ENCODE measurements at regions of chr7 and their contacts with region 1.

Region 1: DNA sequence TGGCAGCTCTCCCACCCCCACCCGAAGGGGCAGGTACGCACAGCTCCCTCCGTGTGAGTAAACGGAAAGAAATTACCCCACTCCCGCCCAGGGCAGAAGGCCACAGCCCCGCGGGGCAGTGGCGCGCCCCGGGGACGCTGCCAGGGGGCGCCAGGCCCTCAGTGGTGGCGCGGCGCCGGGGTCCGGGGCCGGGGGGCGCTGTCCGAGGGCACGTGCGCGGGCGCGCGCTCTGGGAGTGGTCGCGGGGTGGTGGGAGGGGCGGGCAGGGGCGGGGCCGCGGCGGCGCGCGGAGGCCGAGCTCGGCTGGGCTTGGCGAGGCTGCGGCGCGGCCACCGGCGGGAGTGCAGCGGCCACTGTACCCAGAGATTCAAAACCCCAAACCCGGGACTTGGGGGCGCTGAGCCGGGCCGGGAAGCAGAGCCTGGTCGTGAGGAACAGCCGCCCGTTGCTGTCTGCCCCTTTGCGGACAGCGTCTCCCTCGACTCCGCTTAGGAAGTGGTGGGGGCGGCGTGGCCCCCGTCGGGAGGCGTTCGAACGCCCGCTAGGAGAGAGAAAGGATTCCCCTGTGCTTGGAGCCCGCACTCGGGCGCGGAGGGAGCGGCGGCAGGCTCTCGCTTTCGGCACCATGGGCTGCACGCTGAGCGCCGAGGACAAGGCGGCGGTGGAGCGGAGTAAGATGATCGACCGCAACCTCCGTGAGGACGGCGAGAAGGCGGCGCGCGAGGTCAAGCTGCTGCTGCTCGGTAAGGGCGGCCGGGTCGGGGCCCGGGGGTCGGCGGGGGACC is at the start of gene GNAI1:
- DNase-seq: no peak
- H3K4me3 Mint-ChIP-seq: peak within 1 kb of the TSS; percentile 85
- H3K27ac Mint-ChIP-seq: peak within 1 kb of the TSS; percentile 53
- H3K4me1 Mint-ChIP-seq: peaks cover 30% of the 10 kb centered on the region
- H3K27me3 Mint-ChIP-seq: peaks cover 56% of the 10 kb centered on the region
- total RNA-seq, gene GNAI1: 5.3 and 6.0 TPM in 2 replicates

Region 2: DNA sequence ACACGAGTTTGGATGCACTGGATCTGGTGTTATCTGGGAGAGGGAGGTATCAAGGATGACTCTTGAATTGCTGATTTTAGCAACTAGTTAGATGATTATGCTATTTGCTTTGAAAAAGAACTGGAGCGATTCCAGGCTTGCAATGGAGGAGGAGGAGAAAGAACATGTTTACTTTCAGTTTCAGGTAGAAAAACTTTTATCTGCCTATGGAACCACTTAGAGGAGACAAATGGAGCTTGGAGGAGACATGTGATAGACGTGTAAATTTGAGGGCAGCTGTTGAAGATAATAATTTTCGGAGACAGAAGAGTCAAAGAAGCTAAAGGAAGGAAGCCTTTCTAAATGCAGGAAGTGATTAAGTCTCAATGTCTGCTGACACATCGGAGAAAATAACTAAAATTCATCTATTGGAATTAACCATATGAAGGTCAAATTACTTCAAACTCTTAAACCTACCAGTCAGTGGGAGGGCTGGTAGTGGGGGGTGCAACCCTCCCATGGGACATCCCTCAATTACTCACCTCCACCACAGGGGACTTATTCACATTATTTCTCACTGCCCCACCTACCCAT is 56.5 kb before region 1 on chr7:
- intact Hi-C with region 1: loop called (anchors 5 kb)
- DNase-seq: no peak
- H3K4me3 Mint-ChIP-seq: peak overlapping the region; percentile 74
- H3K27ac Mint-ChIP-seq: peak overlapping the region; percentile 52
- H3K4me1 Mint-ChIP-seq: peaks cover 12% of the 10 kb centered on the region
- H3K27me3 Mint-ChIP-seq: no peaks in the 10 kb centered on the region

Region 3: DNA sequence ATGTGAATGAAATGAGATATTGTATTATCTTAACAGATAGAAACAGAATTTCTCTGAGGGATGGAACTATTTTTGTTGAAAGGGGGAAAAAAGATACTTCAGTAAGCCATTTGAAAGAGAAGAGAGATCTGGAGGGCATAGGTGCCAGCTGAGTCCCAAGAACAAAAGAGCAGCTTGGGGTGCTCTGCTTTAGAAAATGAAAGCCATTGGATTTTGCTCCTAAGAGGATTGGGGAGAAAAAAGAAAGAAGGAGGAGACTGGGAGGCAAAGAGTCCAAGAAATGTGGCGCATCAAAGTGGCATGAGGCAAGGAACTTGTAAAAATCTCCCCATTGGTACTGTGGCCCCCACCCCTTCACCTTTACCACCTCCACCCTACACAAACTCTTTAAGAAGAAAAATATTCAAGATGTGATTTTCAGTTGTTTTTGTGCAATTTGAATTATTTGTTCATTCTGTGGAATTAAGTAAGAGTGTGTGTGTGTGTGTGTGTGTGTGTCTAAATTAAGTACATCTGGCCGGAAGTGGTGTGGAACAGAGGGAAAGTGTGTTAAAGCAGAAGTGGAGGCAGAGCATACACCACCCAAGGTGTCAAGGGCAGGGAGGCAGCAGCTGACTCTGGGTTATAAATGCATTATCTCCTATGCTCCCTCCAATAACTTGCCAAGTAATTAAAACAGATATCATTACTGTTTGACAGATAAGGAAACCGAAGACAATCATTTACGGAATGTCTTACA is 10.0 kb before region 1 on chr7:
- intact Hi-C with region 1: no loop called
- DNase-seq: no peak
- H3K4me3 Mint-ChIP-seq: no peak overlapping the region
- H3K27ac Mint-ChIP-seq: no peak overlapping the region
- H3K4me1 Mint-ChIP-seq: no peaks in the 10 kb centered on the region
- H3K27me3 Mint-ChIP-seq: peaks cover 21% of the 10 kb centered on the region

Region 4: GRCh38 chr7:80151274-80151665 is 16.5 kb after region 1 on chr7:
- intact Hi-C with region 1: loop called (anchors 1 kb)
- DNase-seq: no peak
- H3K4me3 Mint-ChIP-seq: peak overlapping the region; percentile 38
- H3K27ac Mint-ChIP-seq: peak overlapping the region; percentile 47
- H3K4me1 Mint-ChIP-seq: peaks cover 17% of the 10 kb centered on the region
- H3K27me3 Mint-ChIP-seq: peaks cover 8% of the 10 kb centered on the region

Region 5: GRCh38 chr7:80216996-80217842 is 82.5 kb after region 1 on chr7:
- intact Hi-C with region 1: loop called (anchors 1 kb)
- DNase-seq: no peak
- H3K4me3 Mint-ChIP-seq: no peak overlapping the region
- H3K27ac Mint-ChIP-seq: no peak overlapping the region
- H3K4me1 Mint-ChIP-seq: no peaks in the 10 kb centered on the region
- H3K27me3 Mint-ChIP-seq: no peaks in the 10 kb centered on the region

Region 6: DNA sequence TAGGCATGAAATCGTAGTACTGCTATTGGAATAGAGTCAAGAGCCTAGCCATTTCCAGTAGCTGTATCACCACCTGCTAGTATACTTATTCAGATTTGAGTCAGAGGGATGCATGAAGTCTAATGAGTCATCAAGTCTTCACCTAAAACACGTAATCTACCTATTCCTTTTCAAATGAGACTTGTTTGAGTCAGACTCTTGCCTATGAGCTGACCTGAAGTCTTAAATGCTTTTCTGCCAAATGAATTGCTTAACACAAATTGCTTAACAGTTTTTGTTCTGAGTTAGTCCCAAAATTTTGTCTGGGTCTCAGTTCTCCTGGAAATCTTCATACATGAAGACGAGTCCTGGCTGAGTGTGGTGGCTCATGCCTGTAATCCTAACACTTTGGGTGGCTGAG is 212.0 kb after region 1 on chr7:
- intact Hi-C with region 1: loop called (anchors 2 kb)
- DNase-seq: no peak
- H3K4me3 Mint-ChIP-seq: no peak overlapping the region
- H3K27ac Mint-ChIP-seq: no peak overlapping the region
- H3K4me1 Mint-ChIP-seq: no peaks in the 10 kb centered on the region
- H3K27me3 Mint-ChIP-seq: no peaks in the 10 kb centered on the region